Caco-2 (cell line): ENCODE measurements at regions of chr12 and their contacts with region 1.

Region 1: DNA sequence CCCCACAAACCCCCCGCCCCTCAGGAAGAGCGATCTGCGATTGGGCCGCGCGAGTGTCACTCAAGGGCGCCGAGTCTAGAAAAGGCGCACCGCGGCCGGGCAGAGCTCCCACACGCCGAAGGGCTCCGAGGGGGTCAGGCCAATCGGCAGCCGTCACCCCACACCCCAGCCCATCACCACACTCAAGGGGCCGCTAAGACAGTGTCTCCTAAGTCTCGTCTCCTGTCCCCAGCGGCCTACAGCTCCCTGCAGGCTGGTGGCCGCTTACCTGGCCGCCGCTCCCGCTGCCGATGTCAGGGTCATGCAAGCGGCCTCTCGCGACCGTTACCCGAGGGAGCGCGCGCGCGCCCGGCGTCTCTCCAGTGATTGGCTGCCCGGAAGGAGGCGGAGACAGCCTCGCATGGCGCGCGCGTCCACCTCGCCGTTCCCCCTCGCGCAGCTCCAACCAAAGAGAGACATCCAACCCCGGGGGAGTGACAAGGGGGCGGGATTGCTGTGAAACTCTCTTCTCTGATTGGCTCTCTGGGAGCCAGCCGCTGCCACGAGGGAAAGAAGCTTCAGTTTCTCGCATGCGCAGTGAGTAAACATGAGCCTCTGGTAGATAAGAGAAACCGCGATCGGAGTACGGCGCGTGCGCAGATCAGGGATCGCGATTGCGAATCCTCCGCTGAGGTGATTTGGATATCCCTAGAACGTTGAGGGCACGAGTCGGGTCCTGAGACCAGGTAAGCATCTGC is at the starts of genes MPHOSPH9 and MTRFR:
- DNase-seq: peak; percentile 98 to 99
- H3K4me3 ChIP-seq: peak within 1 kb of the TSS; percentile 72
- H3K4me3 Mint-ChIP-seq: peak within 1 kb of the TSS; percentile 93
- H3K27ac Mint-ChIP-seq: peak within 1 kb of the TSS; percentile 91
- H3K4me1 ChIP-seq: peaks cover 4% of the 10 kb centered on the region; the same call in 1 of the 2 replicates
- H3K4me1 Mint-ChIP-seq: peaks cover 13% of the 10 kb centered on the region
- H3K27me3 ChIP-seq: no peaks in the 10 kb centered on the region
- H3K27me3 Mint-ChIP-seq: no peaks in the 10 kb centered on the region
- CTCF ChIP-seq: no peak
- total RNA-seq, gene MPHOSPH9: 41.1 and 43.1 TPM in 2 replicates
- total RNA-seq, gene MTRFR: 20.2 and 21.0 TPM in 2 replicates

Region 2: DNA sequence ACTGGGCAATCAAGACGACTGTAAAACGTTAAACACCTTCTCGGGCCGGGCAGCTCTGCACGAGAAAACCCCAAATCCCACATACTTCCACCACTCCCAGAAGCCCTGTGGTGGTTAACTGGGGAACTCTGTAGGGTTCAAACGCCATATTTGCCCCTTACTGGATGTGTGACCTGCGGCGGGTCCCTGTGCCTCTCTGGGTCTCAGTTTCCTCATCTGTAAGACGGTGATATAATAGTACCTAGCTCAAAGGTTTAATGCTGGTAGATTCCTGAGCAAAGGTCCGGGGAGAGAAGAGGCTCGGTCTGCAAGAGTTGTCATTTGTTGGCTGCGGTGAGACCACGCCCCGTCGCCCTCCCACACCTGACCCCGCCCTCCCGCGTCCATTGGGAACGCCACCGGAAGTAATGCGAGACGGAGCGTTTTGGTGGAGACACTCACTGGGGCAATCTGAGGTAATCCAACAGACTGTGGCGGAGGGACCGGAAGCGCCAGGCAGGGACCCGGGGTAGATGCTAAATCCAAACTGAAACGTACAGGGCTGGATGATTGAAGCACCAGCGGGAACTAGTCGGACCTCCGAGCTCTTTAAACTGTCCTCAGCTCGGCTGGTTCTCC is 258.6 kb before region 1 on chr12:
- CTCF ChIA-PET with region 1: no interaction called
- POLR2A ChIA-PET with region 1: interaction called, 9 read pairs
- intact Hi-C with region 1: loop called (anchors 1 kb)
- DNase-seq: peak; percentile 98
- H3K4me3 ChIP-seq: peak overlapping the region; percentile 74
- H3K4me3 Mint-ChIP-seq: peak overlapping the region; percentile 94
- H3K27ac Mint-ChIP-seq: peak overlapping the region; percentile 99
- H3K4me1 ChIP-seq: peaks cover 5% of the 10 kb centered on the region; the same call in 1 of the 2 replicates
- H3K4me1 Mint-ChIP-seq: no peaks in the 10 kb centered on the region
- H3K27me3 ChIP-seq: no peaks in the 10 kb centered on the region
- H3K27me3 Mint-ChIP-seq: no peaks in the 10 kb centered on the region
- CTCF ChIP-seq: no peak

Region 3: DNA sequence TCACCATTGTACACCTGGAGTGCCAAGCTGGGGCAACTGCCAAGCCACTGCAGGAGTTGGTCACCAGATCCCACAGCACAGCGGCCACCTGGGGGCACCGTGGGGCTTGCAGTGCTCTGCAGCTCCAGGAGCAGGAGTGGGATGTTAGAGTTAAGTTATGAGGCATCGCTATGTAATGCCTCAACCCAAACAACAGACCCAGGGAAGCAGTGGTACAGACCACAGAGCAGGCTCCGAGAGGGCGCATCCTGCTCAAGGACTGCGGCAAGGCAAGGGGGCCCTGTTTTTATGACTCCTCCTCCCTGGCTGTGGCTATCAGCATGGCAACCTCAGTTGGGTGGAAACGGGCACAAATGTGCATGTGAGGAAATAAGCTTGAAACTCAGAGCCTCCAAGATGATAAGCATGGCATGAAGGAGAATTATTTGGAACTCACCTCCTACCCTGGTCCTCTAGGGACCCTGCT is 189.4 kb before region 1 on chr12:
- CTCF ChIA-PET with region 1: interaction called, 36 read pairs
- POLR2A ChIA-PET with region 1: interaction called, 5 read pairs
- intact Hi-C with region 1: loop called (anchors 1 kb)
- DNase-seq: peak; percentile 71 to 78
- H3K4me3 ChIP-seq: no peak overlapping the region
- H3K4me3 Mint-ChIP-seq: no peak overlapping the region
- H3K27ac Mint-ChIP-seq: no peak overlapping the region
- H3K4me1 ChIP-seq: no peaks in the 10 kb centered on the region
- H3K4me1 Mint-ChIP-seq: no peaks in the 10 kb centered on the region
- H3K27me3 ChIP-seq: no peaks in the 10 kb centered on the region
- H3K27me3 Mint-ChIP-seq: no peaks in the 10 kb centered on the region
- CTCF ChIP-seq: peak; percentile 65 to 76

Region 4: DNA sequence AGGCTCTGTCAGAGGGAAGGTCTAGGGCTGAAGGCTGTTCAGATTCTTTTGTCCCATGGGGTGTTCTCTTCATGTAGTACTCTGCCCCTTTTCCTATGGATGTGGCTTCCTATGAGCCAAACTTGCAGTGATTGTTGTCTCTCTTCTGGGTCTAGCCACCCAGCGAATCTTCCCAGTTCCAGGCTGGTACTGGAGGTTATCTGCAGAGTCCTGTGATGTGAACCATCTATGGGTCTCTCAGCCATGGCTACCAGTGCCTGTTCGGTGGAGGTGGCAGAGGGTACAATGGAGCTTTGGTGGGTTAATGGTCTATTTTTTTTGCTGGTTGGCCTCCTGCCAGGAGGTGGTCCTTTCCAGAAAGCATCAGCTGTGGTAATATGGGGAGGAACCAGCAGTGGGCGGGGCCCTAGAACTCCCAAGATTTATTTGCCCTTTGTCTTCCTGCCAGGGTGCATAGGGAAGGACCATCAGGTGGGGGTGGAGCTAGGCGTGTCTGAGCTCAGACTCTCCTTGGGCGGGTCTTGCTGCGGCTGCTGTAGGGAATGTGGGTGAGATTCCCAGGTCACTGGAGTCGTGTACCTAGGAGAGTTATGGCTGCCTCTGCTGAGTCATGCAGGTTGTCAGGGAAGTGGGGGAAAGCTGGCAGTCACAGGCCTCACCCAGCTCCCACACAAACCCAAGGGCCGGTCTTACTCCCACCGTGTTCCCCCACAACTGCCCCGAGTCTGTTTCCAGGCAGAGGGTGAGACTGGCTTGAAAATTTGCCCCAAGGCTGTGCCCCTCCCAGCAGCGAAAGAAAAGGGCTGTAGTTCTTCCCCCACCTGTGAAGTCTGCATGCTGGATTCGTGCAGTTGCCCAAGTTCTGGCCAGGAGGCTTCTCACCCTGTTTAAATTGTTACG is 17.8 kb after region 1 on chr12:
- CTCF ChIA-PET with region 1: interaction called, 10 read pairs
- POLR2A ChIA-PET with region 1: interaction called, 31 read pairs
- intact Hi-C with region 1: loop called (anchors 1 kb)
- DNase-seq: peak; percentile 87 to 97
- H3K4me3 ChIP-seq: no peak overlapping the region
- H3K4me3 Mint-ChIP-seq: peak overlapping the region; percentile 50
- H3K27ac Mint-ChIP-seq: peak overlapping the region; percentile 99
- H3K4me1 ChIP-seq: peaks cover 25% of the 10 kb centered on the region
- H3K4me1 Mint-ChIP-seq: peaks cover 20% of the 10 kb centered on the region
- H3K27me3 ChIP-seq: no peaks in the 10 kb centered on the region
- H3K27me3 Mint-ChIP-seq: no peaks in the 10 kb centered on the region
- CTCF ChIP-seq: no peak

Region 5: DNA sequence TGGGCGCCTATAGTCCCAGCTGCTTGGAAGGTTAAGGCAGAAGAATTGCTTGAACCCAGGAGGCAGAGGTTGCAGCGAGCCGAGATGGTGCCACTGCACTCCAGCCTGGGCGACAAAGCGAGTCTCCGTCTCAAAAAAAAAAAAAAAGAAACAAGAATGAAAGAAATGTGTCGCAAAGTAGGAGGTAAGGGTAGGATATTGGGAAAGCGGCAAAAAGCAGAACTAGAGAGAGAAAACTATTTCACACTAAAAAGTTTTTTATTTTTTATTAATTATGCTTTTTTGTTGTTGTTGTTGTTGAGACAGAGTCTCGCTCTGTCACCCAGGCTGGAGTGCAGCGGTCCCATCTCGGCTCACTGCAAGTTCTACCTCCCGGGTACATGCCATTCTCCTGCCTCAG is 114.0 kb after region 1 on chr12:
- CTCF ChIA-PET with region 1: no interaction called
- POLR2A ChIA-PET with region 1: no interaction called
- intact Hi-C with region 1: no loop called
- DNase-seq: no peak
- H3K4me3 ChIP-seq: no peak overlapping the region
- H3K4me3 Mint-ChIP-seq: no peak overlapping the region
- H3K27ac Mint-ChIP-seq: no peak overlapping the region
- H3K4me1 ChIP-seq: no peaks in the 10 kb centered on the region
- H3K4me1 Mint-ChIP-seq: no peaks in the 10 kb centered on the region
- H3K27me3 ChIP-seq: no peaks in the 10 kb centered on the region
- H3K27me3 Mint-ChIP-seq: no peaks in the 10 kb centered on the region
- CTCF ChIP-seq: no peak

Region 6: DNA sequence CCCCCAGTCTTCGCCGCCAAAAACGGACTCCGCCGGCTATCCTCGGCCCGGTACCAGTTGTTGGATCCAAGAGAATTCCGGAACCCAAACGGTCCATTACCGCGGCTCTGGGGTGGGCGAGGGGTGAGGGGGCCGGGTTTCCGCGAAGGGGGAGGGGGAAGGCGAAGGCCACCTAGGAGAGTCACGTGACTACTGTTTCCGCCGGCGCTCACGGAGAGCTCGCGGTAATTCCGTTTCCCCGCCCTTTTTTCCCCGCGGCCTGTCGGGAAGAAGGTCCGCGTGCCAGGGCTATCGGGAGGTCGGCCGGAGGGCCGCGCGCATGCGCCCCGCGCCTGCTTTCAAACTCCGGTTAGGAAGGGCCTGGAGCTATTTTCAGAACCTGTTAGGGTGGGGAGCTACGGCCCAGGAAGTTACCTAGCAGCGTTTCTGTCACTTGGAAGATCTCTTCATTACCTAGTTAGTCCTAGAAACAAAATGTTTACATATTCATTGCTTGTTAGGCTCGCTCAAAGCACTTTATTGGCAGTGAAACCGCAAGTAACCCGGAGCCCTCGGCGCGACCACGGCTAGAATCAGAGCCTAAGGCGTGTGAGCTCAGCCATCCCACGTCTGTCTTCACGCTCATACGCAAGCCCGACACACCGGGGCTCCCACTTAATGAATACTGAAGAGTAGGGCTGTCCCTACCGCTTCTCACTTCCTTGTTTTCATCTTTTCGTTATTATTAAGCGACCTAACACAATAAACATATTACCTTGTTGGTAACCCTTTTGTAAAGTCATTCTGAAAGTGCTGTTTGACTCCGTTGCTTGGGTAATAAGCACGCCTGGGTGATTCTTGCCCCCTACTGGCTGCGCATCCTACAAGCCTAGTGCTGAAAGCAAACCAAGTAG is 132.3 kb after region 1 on chr12:
- CTCF ChIA-PET with region 1: interaction called, 7 read pairs
- POLR2A ChIA-PET with region 1: interaction called, 10 read pairs
- intact Hi-C with region 1: no loop called
- DNase-seq: peak; percentile 98 to 99
- H3K4me3 ChIP-seq: peak overlapping the region; percentile 87
- H3K4me3 Mint-ChIP-seq: peak overlapping the region; percentile 99
- H3K27ac Mint-ChIP-seq: peak overlapping the region; percentile 99
- H3K4me1 ChIP-seq: 0 out of 2 replicates have a peak, but pooled peaks cover 4% of the 10 kb centered on the region
- H3K4me1 Mint-ChIP-seq: peaks cover 7% of the 10 kb centered on the region
- H3K27me3 ChIP-seq: no peaks in the 10 kb centered on the region
- H3K27me3 Mint-ChIP-seq: no peaks in the 10 kb centered on the region
- CTCF ChIP-seq: peak; percentile 79 to 87

Region 7: GRCh38 chr12:123410041-123410412 is 177.1 kb after region 1 on chr12:
- CTCF ChIA-PET with region 1: no interaction called
- POLR2A ChIA-PET with region 1: interaction called, 10 read pairs
- intact Hi-C with region 1: no loop called
- DNase-seq: no peak
- H3K4me3 ChIP-seq: no peak overlapping the region
- H3K4me3 Mint-ChIP-seq: no peak overlapping the region
- H3K27ac Mint-ChIP-seq: no peak overlapping the region
- H3K4me1 ChIP-seq: no peaks in the 10 kb centered on the region
- H3K4me1 Mint-ChIP-seq: no peaks in the 10 kb centered on the region
- H3K27me3 ChIP-seq: no peaks in the 10 kb centered on the region
- H3K27me3 Mint-ChIP-seq: no peaks in the 10 kb centered on the region
- CTCF ChIP-seq: no peak